MCF 10A (cell line): ENCODE measurements at regions of chr6 and their contacts with region 1.

Region 1: DNA sequence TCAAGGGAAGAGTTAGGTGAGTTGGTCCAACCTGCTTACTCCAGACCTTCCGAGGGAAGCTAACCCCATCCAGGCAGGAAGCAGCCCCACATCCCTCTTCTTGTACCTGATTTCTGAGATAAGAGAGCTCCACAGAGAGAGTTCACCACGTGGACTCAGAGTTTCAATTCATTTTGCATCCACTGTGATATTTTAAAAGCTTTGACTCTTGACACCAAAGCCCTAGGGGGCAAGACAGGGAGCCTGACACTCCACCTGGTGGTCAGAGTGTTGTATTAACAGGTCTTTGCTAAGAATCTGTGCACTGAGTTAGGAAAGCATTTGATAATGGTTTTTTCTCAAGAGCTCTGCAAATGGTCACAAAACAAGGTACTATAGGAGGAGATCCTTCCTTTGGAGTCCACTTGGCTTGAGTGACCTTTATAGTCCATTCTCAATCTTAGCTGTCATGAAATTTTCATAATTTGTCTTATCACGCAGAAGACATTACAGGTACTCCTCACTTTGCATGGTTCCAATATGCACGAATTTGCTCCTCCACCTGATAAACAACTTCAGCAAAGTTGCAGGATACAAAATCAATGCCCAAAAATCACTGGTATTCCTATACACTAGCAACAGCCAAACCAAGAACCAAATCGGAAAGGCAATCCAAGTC is 56.2 kb upstream of the RIPOR2 start:
- DNase-seq: peak; percentile 76
- H3K4me3 Mint-ChIP-seq: no peak overlapping the region
- H3K27ac Mint-ChIP-seq: no peak overlapping the region
- H3K4me1 Mint-ChIP-seq: peaks cover 19% of the 10 kb centered on the region
- H3K27me3 Mint-ChIP-seq: no peaks in the 10 kb centered on the region
- CTCF ChIP-seq: peak; percentile 37

Region 2: GRCh38 chr6:24980507-24981387 is 11.2 kb before region 1 on chr6:
- CTCF ChIA-PET with region 1: interaction called, 19 read pairs
- POLR2A ChIA-PET with region 1: interaction called, 6 read pairs
- intact Hi-C with region 1: no loop called
- DNase-seq: no peak
- H3K4me3 Mint-ChIP-seq: no peak overlapping the region
- H3K27ac Mint-ChIP-seq: peak overlapping the region; percentile 60
- H3K4me1 Mint-ChIP-seq: peaks cover 34% of the 10 kb centered on the region
- H3K27me3 Mint-ChIP-seq: no peaks in the 10 kb centered on the region
- CTCF ChIP-seq: no peak